ENCODE measurements at regions of chr6 and their contacts with region 1.

Region 1: GRCh38 chr6:89371849-89372505 is 19.5 kb upstream of the UBE2J1 start:
- DNase-seq: peak; percentile 84
- ATAC-seq: peak; percentile 89

Region 2: DNA sequence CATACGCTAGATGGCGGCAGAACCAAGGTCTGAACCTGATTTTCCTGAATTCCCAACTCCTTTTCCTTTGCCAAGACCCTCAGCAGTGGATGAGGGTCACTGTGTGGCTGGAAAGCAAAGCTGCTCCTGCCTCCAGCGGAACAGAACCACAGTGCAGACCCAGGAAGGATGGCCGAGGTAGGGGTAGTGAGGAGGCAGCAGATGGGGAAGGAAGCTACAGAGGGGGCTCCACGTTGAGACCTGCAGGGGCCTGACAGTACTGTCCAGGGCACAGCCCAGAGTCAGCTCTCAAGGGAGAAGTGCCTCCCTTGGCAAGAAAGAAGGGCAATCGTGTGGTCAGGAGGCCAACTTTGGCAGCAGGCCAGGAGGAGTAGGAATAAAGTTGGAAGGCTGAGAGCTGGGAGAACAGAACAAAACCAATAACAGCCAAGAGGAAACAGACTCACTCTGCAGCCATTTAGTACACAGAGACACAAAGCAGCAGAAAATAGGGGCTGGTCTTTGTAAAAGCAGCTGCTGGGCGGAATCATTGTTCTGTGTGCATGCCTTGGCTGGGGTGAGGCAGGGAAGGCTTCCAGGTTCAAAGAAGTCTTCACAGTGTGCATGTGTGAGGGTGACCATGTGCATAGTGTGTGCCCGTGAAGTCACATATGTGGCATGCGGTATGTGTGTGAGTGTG is 60.0 kb before region 1 on chr6:
- intact Hi-C with region 1: loop called (anchors 5 kb)
- DNase-seq: peak; percentile 80
- ATAC-seq: peak; percentile 81

Region 3: GRCh38 chr6:89412071-89413005 is 40.4 kb after region 1 on chr6 and contains the start of gene RRAGD:
- intact Hi-C with region 1: loop called (anchors 5 kb)
- DNase-seq: peak; percentile 87
- ATAC-seq: peak; percentile 88
- total RNA-seq, gene RRAGD: 130 TPM

Measured in Right ventricle myocardium superior (tissue), 1 donor.